Right ventricle myocardium inferior (tissue), 1 donor: ENCODE measurements at regions of chr3 and their contacts with region 1.

Region 1: DNA sequence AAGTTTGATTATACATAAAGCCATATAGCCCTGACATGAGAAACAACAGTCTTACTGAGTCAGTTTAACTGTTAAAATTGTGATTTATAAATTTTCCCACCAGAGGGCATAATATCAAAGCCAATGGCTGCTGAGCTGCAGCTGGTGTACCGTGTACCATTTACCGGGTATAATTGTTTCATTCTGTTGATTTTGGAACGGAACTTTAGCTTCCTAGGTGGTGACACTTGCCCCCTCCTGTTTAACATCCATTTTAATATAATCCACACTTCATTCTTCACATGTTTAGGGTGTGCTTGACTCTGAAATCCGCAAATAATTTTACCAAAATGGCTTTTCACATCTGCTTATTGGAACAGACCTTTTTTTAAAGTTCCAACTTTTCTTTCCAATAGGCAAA is 72.8 kb downstream of the SLC9A9 start:
- DNase-seq: no peak
- ATAC-seq: peak; percentile 50

Region 2: GRCh38 chr3:143951351-143951971 is 176.0 kb after region 1 on chr3:
- intact Hi-C with region 1: loop called (anchors 5 kb)
- DNase-seq: no peak
- ATAC-seq: no peak